MCF 10A (cell line): ENCODE measurements at regions of chr6 and their contacts with region 1.

Region 1: GRCh38 chr6:2103644-2104523 is 141.5 kb downstream of the GMDS start:
- DNase-seq: peak; percentile 66
- H3K4me3 Mint-ChIP-seq: peak overlapping the region; percentile 70
- H3K27ac Mint-ChIP-seq: peak overlapping the region; percentile 30
- H3K4me1 Mint-ChIP-seq: peaks cover 22% of the 10 kb centered on the region
- H3K27me3 Mint-ChIP-seq: no peaks in the 10 kb centered on the region
- CTCF ChIP-seq: peak; percentile 70

Region 2: DNA sequence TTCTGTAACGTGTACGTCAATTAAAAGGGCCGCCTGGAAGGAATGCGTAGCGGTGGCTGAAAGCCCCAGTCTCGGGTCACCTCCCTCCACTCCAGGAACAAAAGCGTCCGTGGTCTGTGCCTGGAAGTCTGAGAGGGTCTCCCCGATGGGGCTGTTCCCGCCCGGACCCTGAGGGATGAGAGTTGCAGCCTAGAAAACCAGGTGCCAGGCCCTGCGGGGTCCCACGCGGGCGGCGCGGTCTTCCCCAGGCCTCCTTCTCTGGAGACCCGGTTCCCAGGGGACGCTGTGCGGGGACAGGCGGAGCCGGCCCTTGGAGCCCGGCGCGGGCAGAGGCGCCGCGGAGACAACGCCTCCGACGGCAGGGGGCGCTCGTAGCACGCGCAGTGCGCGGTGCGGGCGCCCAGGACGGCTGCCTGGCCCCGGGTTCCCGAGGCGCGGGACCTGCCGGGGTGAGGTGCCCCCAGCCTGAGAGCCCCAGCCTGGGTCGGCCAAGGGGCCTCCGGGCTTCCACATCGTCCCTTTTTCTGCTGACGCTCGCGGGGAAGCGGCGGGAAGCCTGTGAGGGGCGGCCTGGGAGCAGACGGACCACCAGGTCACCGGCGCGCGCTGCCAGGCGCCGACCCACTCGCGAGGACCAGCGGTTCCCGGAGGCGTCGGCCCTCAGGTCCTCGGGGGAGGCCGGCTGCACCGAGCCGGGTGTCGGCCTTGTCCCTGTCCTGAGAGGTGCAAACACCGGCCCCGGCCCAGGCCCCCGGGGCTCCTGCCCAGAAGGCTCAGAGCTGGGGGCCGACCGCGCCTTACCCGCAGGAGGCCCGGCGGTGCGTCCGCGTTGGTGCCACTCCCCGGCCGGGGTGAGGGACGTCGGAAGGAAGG is 499.5 kb before region 1 on chr6:
- CTCF ChIA-PET with region 1: interaction called, 25 read pairs
- POLR2A ChIA-PET with region 1: interaction called, 68 read pairs
- intact Hi-C with region 1: loop called (anchors 1 kb)
- DNase-seq: peak; percentile 66
- H3K4me3 Mint-ChIP-seq: peak overlapping the region; percentile 28
- H3K27ac Mint-ChIP-seq: no peak overlapping the region
- H3K4me1 Mint-ChIP-seq: no peaks in the 10 kb centered on the region
- H3K27me3 Mint-ChIP-seq: no peaks in the 10 kb centered on the region
- CTCF ChIP-seq: peak; percentile 97

Region 3: DNA sequence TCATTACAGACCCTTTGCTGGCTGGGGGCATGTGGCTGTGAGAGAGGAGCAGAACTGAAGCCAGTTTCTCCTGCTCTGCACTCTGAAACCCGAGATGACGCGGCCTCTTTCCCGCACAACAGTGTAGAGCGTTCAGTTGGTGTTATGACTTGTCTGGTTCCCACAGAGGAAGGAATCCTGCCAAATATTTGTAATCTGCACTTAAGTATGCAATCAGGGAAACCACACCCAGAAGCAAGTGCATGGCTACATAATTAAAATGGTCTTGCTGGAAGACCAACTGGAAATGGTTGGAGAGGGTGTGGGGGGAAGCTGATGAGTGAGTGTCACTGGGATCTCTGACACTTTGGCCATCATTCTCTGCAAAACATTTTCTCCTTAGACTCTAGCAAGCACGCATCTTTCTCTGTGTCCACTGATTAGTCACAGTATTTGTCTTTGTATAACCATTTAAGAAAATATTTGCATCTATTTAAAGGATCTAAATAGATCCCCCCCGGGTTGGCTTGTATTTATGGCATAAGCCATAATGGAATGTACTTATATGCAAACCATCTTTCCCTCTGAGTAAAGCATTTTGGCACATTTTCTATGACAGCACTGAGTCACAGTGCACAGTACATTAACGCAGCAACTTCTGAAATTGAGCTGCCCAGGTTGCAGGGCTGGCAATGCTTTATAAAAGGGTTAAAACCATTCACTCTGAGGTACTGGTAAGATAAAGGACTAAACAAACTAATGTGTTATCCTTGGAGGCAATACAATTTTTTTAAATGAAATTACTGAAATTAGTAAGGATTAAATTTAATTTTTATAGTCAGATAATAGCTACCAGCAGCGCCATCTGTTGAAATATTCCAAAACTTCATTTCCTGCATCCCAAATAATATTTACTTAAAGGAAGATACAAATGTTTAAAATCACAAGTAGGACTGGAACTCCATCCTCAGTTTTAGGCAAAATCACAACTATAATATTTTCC is 417.5 kb before region 1 on chr6:
- CTCF ChIA-PET with region 1: interaction called, 11 read pairs
- POLR2A ChIA-PET with region 1: interaction called, 3 read pairs
- intact Hi-C with region 1: loop called (anchors 1 kb)
- DNase-seq: peak; percentile 96
- H3K4me3 Mint-ChIP-seq: peak overlapping the region; percentile 47
- H3K27ac Mint-ChIP-seq: peak overlapping the region; percentile 82
- H3K4me1 Mint-ChIP-seq: peaks cover 46% of the 10 kb centered on the region
- H3K27me3 Mint-ChIP-seq: no peaks in the 10 kb centered on the region
- CTCF ChIP-seq: peak; percentile 25

Region 4: GRCh38 chr6:1856381-1856780 is 247.5 kb before region 1 on chr6:
- CTCF ChIA-PET with region 1: interaction called, 4 read pairs
- POLR2A ChIA-PET with region 1: no interaction called
- intact Hi-C with region 1: loop called (anchors 1 kb)
- DNase-seq: peak; percentile 73
- H3K4me3 Mint-ChIP-seq: no peak overlapping the region
- H3K27ac Mint-ChIP-seq: no peak overlapping the region
- H3K4me1 Mint-ChIP-seq: peaks cover 6% of the 10 kb centered on the region
- H3K27me3 Mint-ChIP-seq: no peaks in the 10 kb centered on the region
- CTCF ChIP-seq: no peak

Region 5: GRCh38 chr6:2196079-2196679 is 92.3 kb after region 1 on chr6:
- CTCF ChIA-PET with region 1: interaction called, 6 read pairs
- POLR2A ChIA-PET with region 1: no interaction called
- intact Hi-C with region 1: loop called (anchors 1 kb)
- DNase-seq: peak; percentile 72
- H3K4me3 Mint-ChIP-seq: no peak overlapping the region
- H3K27ac Mint-ChIP-seq: no peak overlapping the region
- H3K4me1 Mint-ChIP-seq: no peaks in the 10 kb centered on the region
- H3K27me3 Mint-ChIP-seq: no peaks in the 10 kb centered on the region
- CTCF ChIP-seq: peak; percentile 62

Region 6: DNA sequence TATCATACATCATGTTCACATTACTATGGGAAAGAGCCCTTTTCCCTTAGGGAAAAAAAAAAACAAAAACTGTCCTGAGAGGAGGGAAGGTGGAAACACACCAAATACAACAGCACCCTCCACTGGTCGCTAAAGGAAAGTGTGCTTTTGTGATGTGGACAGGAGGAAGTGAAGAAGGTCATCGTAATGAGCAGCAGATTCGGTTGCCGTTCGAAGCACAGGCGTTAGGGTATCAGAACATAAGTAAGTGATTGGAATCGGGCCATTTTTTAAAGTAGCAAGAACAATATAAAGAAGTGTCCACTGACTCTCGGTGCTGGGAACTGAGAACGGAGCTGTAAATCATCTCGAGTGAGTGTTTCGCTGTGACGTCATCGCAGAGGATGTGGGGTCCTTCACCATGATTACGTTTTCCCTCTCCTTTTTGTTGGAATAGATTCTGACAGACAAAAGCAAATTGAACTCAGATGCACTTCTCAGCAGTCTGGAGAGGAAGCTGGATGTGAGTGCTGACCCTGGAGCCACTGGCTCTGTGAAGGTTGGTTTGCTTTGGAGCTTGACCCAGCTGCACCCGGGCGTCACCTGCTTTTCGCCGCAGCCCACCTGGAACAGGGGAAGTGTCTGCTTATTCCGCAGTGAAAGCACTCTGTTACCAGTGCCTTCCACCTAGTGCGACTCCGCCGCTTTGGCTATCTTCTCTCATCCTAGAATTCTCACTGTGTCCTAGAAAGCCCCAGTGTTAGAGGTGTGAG is 345.1 kb after region 1 on chr6:
- CTCF ChIA-PET with region 1: no interaction called
- POLR2A ChIA-PET with region 1: no interaction called
- intact Hi-C with region 1: loop called (anchors 1 kb)
- DNase-seq: peak; percentile 82
- H3K4me3 Mint-ChIP-seq: no peak overlapping the region
- H3K27ac Mint-ChIP-seq: no peak overlapping the region
- H3K4me1 Mint-ChIP-seq: peaks cover 6% of the 10 kb centered on the region
- H3K27me3 Mint-ChIP-seq: no peaks in the 10 kb centered on the region
- CTCF ChIP-seq: peak; percentile 67

Region 7: GRCh38 chr6:3789018-3789895 is 1685.4 kb after region 1 on chr6:
- CTCF ChIA-PET with region 1: no interaction called
- POLR2A ChIA-PET with region 1: no interaction called
- intact Hi-C with region 1: no loop called
- DNase-seq: no peak
- H3K4me3 Mint-ChIP-seq: no peak overlapping the region
- H3K27ac Mint-ChIP-seq: no peak overlapping the region
- H3K4me1 Mint-ChIP-seq: peaks cover 10% of the 10 kb centered on the region
- H3K27me3 Mint-ChIP-seq: no peaks in the 10 kb centered on the region
- CTCF ChIP-seq: no peak